Common myeloid progenitor, CD34-positive (primary cell): ENCODE measurements at regions of chr11 and their contacts with region 1.

Region 1: GRCh38 chr11:64846998-64847666 is 2.7 kb upstream of the CDC42BPG start:
- DNase-seq: peak; percentile 88 to 94 (median 93)
- H3K4me3 ChIP-seq: no peak overlapping the region
- H3K27ac ChIP-seq: no peak overlapping the region
- H3K4me1 ChIP-seq: peaks cover 3 to 50% (median 38%) of the 10 kb centered on the region in 4 experiments
- H3K27me3 ChIP-seq: no peaks in the 10 kb centered on the region

Region 2: GRCh38 chr11:64787526-64788320 is 59.4 kb before region 1 on chr11:
- CTCF ChIA-PET with region 1: interaction called, 20 read pairs
- POLR2A ChIA-PET with region 1: no interaction called
- DNase-seq: peak; percentile 50 to 76 (median 72)
- H3K4me3 ChIP-seq: no peak overlapping the region
- H3K27ac ChIP-seq: no peak overlapping the region
- H3K4me1 ChIP-seq: peaks cover 0 to 5% (median 2%) of the 10 kb centered on the region in 4 experiments
- H3K27me3 ChIP-seq: no peaks in the 10 kb centered on the region

Region 3: DNA sequence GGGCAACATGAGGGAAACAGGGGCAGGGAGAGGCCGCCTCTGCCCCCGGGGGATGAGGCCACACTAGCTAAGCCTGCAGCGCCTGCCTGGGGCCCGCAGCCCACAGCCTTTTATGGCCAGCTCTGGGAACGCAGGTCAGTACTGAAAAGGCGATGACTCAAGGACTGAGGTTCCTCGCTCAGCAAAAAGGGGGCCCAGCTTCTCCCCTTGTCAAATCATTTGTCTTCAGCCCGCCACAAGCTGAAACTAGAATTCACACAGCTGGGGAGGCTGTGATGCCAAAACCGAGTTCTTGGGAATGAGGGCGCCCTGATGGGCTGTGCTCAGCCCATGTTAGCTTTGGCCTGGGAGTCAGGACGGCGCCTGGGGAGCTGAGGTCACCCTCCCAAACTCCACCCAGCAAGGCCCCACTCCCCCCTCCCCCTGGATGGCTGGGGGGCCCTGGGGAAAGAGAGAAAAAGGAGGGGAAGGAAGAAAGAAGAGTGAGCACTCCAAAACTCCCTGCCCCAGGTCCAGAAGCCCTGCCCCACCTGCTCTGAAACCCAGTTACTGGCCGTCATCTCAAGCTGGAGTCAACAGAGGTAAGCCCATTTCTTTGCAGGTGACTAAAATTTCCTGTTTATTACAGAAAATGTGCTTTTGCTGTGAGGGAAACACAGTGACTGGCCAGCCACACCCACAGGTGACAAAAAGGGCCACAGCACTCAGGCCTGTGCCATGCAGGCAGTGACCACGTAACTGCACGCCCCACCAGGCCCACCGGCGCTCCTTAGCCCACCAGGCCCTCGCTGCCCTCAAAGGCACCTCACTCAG is 17.5 kb after region 1 on chr11:
- CTCF ChIA-PET with region 1: interaction called, 268 read pairs
- POLR2A ChIA-PET with region 1: interaction called, 4 read pairs
- DNase-seq: peak in 2 of 3 donors; percentile 55 to 64
- H3K4me3 ChIP-seq: no peak overlapping the region
- H3K27ac ChIP-seq: peak overlapping the region in 1 of 2 experiments; percentile 64
- H3K4me1 ChIP-seq: peaks cover 7 to 62% (median 51%) of the 10 kb centered on the region in 4 experiments
- H3K27me3 ChIP-seq: no peaks in the 10 kb centered on the region

Region 4: GRCh38 chr11:64878494-64879243 is 31.5 kb after region 1 on chr11 and contains the start of gene EHD1:
- CTCF ChIA-PET with region 1: interaction called, 1,071 read pairs
- POLR2A ChIA-PET with region 1: interaction called, 16 read pairs
- DNase-seq: peak; percentile 97 to 98 (median 98)
- H3K4me3 ChIP-seq: peak within 1 kb of the TSS; percentile 72 to 95 (median 90)
- H3K27ac ChIP-seq: peak within 1 kb of the TSS; percentile 64 to 92
- H3K4me1 ChIP-seq: peaks cover 18 to 54% (median 51%) of the 10 kb centered on the region in 4 experiments
- H3K27me3 ChIP-seq: no peaks in the 10 kb centered on the region

Region 5: GRCh38 chr11:64996710-64997380 is 149.7 kb after region 1 on chr11 and contains the start of gene BATF2:
- CTCF ChIA-PET with region 1: interaction called, 19 read pairs
- POLR2A ChIA-PET with region 1: no interaction called
- DNase-seq: peak; percentile 56 to 72 (median 70)
- H3K4me3 ChIP-seq: peak within 1 kb of the TSS in 5 of 7 experiments; percentile 8 to 78 (median 64)
- H3K27ac ChIP-seq: peak within 1 kb of the TSS in 1 of 2 experiments; percentile 10
- H3K4me1 ChIP-seq: peaks cover 0 to 14% (median 11%) of the 10 kb centered on the region in 4 experiments
- H3K27me3 ChIP-seq: peaks cover 0 to 5% (median 0%) of the 10 kb centered on the region in 5 experiments